WTC11 (cell line): ENCODE measurements at regions of chr14 and their contacts with region 1.

Region 1: GRCh38 chr14:59507063-59507780 is 22.9 kb downstream of the JKAMP start:
- DNase-seq: peak; percentile 88
- ATAC-seq: peak; percentile 98
- H3K4me3 Mint-ChIP-seq: no peak overlapping the region
- H3K27ac Mint-ChIP-seq: no peak overlapping the region
- H3K4me1 Mint-ChIP-seq: peaks cover 8% of the 10 kb centered on the region
- H3K27me3 Mint-ChIP-seq: no peaks in the 10 kb centered on the region; the same call in 1 of the 2 replicates
- CTCF ChIP-seq: peak; percentile 84

Region 2: GRCh38 chr14:59483900-59484638 is 23.2 kb before region 1 on chr14 and contains the starts of genes JKAMP and L3HYPDH:
- CTCF ChIA-PET with region 1: interaction called, 30 read pairs
- POLR2A ChIA-PET with region 1: interaction called, 7 read pairs
- DNase-seq: peak; percentile 98
- ATAC-seq: peak; percentile 94
- H3K4me3 Mint-ChIP-seq: peak within 1 kb of the TSS; percentile 83
- H3K27ac Mint-ChIP-seq: peak within 1 kb of the TSS; percentile 87
- H3K4me1 Mint-ChIP-seq: peaks cover 19% of the 10 kb centered on the region
- H3K27me3 Mint-ChIP-seq: no peaks in the 10 kb centered on the region
- CTCF ChIP-seq: no peak
- total RNA-seq, gene JKAMP: 29.1 to 33.2 TPM (median 31.7 TPM) in 3 replicates
- total RNA-seq, gene L3HYPDH: 14.3 to 17.5 TPM (median 16.6 TPM) in 3 replicates

Region 3: DNA sequence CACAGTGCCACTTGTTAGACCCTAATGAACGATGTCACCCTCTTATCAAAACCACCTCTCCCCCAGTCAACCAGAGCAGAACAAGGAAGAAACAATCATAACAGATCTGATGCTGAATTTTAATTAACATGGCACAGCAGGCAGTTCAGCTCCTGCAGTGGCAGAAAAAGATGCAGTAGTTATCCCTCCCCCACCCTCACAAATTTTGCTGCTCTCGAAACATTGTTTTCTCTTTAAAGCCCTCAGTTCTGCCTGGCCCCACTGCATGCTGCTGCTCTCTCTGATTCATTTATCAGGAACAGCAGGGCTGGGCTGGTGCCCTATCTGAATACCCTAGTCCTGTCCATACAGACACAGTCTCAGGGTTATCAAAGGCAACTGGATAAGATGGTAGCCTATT is 57.1 kb after region 1 on chr14:
- CTCF ChIA-PET with region 1: interaction called, 103 read pairs
- POLR2A ChIA-PET with region 1: no interaction called
- DNase-seq: no peak
- ATAC-seq: peak; percentile 60
- H3K4me3 Mint-ChIP-seq: no peak overlapping the region
- H3K27ac Mint-ChIP-seq: no peak overlapping the region
- H3K4me1 Mint-ChIP-seq: peaks cover 29% of the 10 kb centered on the region
- H3K27me3 Mint-ChIP-seq: no peaks in the 10 kb centered on the region
- CTCF ChIP-seq: no peak

Region 4: DNA sequence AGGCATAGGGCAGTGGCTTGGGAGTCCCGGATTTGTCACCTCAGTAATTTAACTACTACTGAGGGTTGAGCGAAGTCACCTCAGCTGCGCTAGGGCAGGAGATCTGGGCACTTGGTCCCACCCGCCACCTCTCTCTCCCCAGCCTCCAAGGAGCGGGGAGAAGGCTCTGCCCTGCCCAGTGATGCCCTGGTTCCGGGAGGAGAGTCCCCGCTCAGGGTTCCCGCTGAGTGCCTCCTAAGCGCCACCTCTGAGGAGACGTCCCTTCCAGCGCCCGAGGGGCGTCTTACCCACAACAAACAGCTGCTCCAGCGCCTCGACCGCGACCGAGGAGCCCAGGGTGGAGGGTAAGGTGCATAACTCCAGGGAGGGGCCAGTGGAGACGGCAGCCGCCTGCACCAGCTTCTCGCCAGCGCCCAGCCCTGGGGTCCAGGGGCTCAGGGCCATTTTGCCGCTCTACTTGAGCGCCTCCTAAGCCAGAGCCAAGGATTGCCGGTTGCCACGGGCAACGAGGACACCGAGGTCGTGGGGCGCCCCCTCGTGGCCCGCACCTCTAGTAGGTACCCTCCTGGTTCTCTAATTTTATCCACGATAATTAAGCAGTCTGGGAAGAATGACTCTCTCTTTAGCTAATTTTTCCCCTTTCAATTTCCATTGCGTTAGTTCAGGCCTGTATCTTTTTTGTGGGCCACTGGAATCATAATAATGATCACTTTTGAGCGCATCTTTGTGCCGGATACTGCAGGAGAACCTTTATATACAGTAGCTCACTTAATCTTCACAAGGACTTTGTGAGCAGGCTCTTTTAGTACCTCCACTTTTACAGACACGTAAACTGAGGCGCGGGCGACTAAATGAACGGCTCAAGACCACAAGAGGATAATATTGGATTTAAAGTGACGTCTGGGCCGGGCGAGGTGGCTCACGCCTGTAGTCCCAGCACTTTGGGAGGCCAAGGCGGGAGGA is 69.4 kb after region 1 on chr14 and contains the start of gene CCDC175:
- CTCF ChIA-PET with region 1: interaction called, 169 read pairs
- POLR2A ChIA-PET with region 1: interaction called, 10 read pairs
- DNase-seq: peak; percentile 95
- ATAC-seq: peak; percentile 98
- H3K4me3 Mint-ChIP-seq: peak within 1 kb of the TSS; percentile 79
- H3K27ac Mint-ChIP-seq: no peak within 1 kb of the TSS
- H3K4me1 Mint-ChIP-seq: no peaks in the 10 kb centered on the region
- H3K27me3 Mint-ChIP-seq: no peaks in the 10 kb centered on the region
- CTCF ChIP-seq: peak; percentile 87
- total RNA-seq, gene CCDC175: 0.16 to 0.27 TPM in 2 of 3 replicates, not detected in the other

Region 5: DNA sequence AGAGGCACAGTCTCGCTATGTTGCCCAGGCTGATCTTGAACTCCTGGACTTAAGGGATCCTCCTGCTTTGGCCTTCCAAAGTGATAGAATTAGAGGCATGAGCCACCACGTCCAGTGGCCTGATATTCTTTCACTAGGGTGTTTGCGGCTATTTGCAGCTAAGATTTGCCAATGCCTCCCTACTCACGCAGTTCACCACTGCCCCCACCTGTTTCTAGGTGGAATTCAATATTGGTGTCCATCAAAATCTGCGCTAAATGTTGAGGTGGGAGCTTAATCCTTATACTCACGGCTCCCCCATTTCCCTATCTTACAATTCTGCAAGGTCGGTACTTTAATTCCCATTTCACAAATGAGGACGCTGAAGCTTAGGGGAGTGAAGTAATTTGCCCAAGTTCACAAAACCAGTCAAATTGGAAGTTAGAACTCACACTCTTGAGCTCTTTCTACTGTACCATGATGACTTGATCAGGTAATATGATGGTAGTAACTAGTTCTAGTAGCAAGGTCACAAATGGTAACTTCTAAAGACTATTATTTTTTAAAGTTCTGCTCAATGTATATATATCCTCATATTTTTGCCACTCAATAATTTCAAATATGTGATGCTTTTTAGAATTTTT is 390.6 kb after region 1 on chr14:
- CTCF ChIA-PET with region 1: interaction called, 22 read pairs
- POLR2A ChIA-PET with region 1: no interaction called
- DNase-seq: peak; percentile 39
- ATAC-seq: peak; percentile 94
- H3K4me3 Mint-ChIP-seq: no peak overlapping the region
- H3K27ac Mint-ChIP-seq: no peak overlapping the region
- H3K4me1 Mint-ChIP-seq: no peaks in the 10 kb centered on the region
- H3K27me3 Mint-ChIP-seq: 0 out of 2 replicates have a peak, but pooled peaks cover 2% of the 10 kb centered on the region
- CTCF ChIP-seq: no peak